ENCODE measurements at regions of chr20 and their contacts with region 1.

Region 1: GRCh38 chr20:17898548-17898994 is 70.0 kb downstream of the SNX5 start:
- DNase-seq: peak; percentile 86
- ATAC-seq: peak; percentile 75
- H3K4me3 ChIP-seq: no peak overlapping the region
- H3K27ac ChIP-seq: no peak overlapping the region
- H3K4me1 ChIP-seq: no peaks in the 10 kb centered on the region
- H3K27me3 ChIP-seq: no peaks in the 10 kb centered on the region
- CTCF ChIP-seq: peak; percentile 98

Region 2: DNA sequence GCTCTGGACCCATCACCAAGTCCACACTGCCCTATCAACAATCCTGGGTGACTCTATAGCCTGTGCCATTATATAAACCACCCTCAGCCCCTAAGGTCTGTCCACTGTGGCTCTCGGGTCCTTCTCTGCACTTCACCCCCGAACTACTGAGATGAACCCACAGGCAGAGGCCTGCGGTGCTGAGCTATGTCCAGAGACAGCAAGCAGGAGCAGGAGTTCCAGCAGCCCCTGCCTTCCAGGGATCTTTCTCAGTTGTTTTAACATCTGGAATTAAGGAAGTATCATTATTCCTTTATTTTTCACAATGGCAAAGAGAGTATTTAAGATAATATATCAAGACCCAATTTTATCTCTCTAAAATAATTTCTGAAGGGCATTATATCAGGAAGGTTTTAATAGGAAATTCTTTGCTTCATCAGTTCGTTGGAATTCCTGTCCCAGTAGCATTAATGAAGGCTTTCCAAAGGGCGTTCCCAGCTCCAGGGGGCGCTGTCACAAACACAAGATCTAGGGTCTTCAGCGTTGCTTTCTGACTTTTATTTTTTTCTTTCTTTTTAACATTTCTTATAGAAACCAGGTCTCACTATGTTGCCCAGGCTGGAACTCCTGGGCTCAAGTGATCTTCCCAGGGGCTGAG is 243.8 kb before region 1 on chr20:
- CTCF ChIA-PET with region 1: interaction called, 4 read pairs
- POLR2A ChIA-PET with region 1: no interaction called
- intact Hi-C with region 1: loop called (anchors 2 kb)
- DNase-seq: peak; percentile 51
- ATAC-seq: no peak
- H3K4me3 ChIP-seq: no peak overlapping the region
- H3K27ac ChIP-seq: 0 out of 2 replicates have a peak overlapping the region, but pooled peaks have one; percentile 4
- H3K4me1 ChIP-seq: peaks cover 26% of the 10 kb centered on the region
- H3K27me3 ChIP-seq: no peaks in the 10 kb centered on the region
- CTCF ChIP-seq: peak; percentile 95

Region 3: DNA sequence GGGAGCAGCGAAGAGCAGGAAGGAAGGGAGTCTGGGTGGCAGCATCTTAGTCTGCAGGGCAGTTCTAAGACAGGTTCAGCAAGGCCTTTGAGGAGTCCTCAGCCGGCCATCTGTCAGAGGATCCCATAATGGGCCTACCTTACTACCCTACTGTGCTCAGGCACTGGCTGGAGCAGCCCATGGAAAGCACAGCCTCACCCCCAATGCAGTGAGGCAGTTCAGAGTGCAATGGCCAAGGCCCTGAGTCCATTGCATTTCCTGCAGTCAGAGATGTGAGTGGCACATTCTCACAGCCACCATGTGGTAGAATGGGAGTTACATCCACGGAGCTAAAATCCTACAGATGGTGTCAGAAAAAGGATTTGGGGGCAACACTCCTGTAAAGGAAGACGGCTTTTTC is 178.6 kb after region 1 on chr20:
- CTCF ChIA-PET with region 1: no interaction called
- POLR2A ChIA-PET with region 1: no interaction called
- intact Hi-C with region 1: no loop called
- DNase-seq: no peak
- ATAC-seq: no peak
- H3K4me3 ChIP-seq: no peak overlapping the region
- H3K27ac ChIP-seq: no peak overlapping the region
- H3K4me1 ChIP-seq: no peaks in the 10 kb centered on the region
- H3K27me3 ChIP-seq: no peaks in the 10 kb centered on the region
- CTCF ChIP-seq: no peak

Region 4: DNA sequence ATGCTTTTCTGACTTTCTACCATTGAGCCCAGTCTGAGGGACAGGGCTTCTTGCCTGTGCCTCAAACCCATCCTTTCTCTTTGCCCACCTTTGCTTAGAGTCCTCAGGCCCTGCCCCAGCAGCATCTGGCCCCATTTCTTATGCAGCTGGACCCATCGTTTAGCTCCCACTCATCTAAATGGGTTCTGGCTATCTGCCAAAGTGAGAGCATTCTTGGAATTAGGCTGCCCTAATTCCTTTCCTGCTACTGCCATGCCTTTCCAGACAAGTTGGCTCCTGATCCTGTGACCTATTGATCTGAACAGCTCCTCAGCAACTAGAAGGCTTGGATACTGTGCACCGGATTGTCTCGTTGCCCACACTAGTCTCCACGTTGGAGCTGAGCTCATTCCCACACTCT is 545.3 kb after region 1 on chr20:
- CTCF ChIA-PET with region 1: no interaction called
- POLR2A ChIA-PET with region 1: no interaction called
- intact Hi-C with region 1: no loop called
- DNase-seq: no peak
- ATAC-seq: no peak
- H3K4me3 ChIP-seq: no peak overlapping the region
- H3K27ac ChIP-seq: no peak overlapping the region
- H3K4me1 ChIP-seq: no peaks in the 10 kb centered on the region
- H3K27me3 ChIP-seq: no peaks in the 10 kb centered on the region
- CTCF ChIP-seq: no peak

Measured in PC-3 (cell line).